ENCODE measurements at regions of chr14 and their contacts with region 1.

Region 1: GRCh38 chr14:49767562-49768300 is at the start of gene KLHDC2:
- DNase-seq: peak; percentile 84 to 94 (median 89)
- ATAC-seq: peak; percentile 88
- H3K4me3 ChIP-seq: peak within 1 kb of the TSS; percentile 62
- H3K4me3 Mint-ChIP-seq: peak within 1 kb of the TSS; percentile 95 to 99 (median 98)
- H3K27ac ChIP-seq: peak within 1 kb of the TSS; percentile 96
- H3K27ac Mint-ChIP-seq: peak within 1 kb of the TSS; percentile 98 to 100 (median 99)
- H3K4me1 ChIP-seq: peaks cover 26 to 27% of the 10 kb centered on the region in 2 donors
- H3K4me1 Mint-ChIP-seq: peaks cover 20 to 46% (median 40%) of the 10 kb centered on the region in 7 donors
- H3K27me3 ChIP-seq: no peaks in the 10 kb centered on the region
- H3K27me3 Mint-ChIP-seq: peaks cover 0 to 2% (median 0%) of the 10 kb centered on the region in 5 donors
- total RNA-seq, gene KLHDC2: 33.2 to 105 (median 84.7) TPM

Region 2: DNA sequence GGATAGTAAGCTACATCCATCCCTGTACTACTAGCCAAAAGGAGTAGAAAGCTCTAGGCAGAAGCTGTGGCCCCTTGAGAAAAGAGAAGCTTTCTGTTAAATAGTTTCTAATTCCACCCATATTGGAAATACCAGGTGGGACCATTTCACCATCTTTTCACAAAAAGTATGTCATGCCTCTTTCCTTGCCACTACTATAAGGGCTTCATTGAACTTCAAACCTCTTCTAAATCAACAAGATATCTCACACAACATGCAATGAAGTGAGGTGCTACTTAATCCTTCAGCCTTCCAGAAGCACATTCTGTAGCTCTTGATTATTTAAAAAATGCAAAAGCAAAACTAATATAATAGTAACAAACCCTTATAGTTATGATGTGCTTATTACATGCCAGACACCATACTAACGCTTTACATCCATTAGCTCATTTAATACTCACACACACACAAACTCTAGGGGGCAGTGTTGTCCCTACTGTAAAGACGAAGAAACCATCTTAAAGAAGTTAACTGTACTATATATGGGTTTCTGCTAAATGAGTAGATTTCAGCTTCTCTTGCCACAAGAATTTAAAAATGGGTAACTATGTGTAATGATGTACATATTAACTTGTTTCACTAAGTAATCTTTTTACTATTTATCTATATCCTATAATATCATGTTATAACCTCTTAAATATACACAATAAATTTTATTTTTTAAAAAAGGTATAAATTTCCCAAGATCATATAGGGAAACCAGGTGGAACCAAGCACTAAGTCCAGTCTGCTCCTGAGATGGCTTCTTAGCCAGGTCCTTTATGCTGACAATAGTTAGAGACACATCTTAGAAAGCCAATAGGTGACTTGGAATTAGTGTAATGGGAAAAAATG is 306.0 kb before region 1 on chr14:
- CTCF ChIA-PET with region 1: no interaction called
- POLR2A ChIA-PET with region 1: no interaction called
- intact Hi-C with region 1: loop called in 1 of 2 experiments (anchors 10 kb)
- DNase-seq: peak in 7 of 9 donors; percentile 43 to 74 (median 67)
- ATAC-seq: peak; percentile 95
- H3K4me3 ChIP-seq: no peak overlapping the region
- H3K4me3 Mint-ChIP-seq: no peak overlapping the region
- H3K27ac ChIP-seq: no peak overlapping the region
- H3K27ac Mint-ChIP-seq: no peak overlapping the region
- H3K4me1 ChIP-seq: no peaks in the 10 kb centered on the region
- H3K4me1 Mint-ChIP-seq: no peaks in the 10 kb centered on the region
- H3K27me3 ChIP-seq: no peaks in the 10 kb centered on the region
- H3K27me3 Mint-ChIP-seq: peaks cover 0 to 31% (median 6%) of the 10 kb centered on the region in 5 donors

Region 3: GRCh38 chr14:49598485-49599300 is 169.0 kb before region 1 on chr14 and contains the start of gene LRR1:
- CTCF ChIA-PET with region 1: no interaction called
- POLR2A ChIA-PET with region 1: interaction called, 6 read pairs
- intact Hi-C with region 1: loop called in 1 of 2 experiments (anchors 1 kb)
- DNase-seq: peak; percentile 74 to 91 (median 84)
- ATAC-seq: peak; percentile 93
- H3K4me3 ChIP-seq: peak within 1 kb of the TSS; percentile 94
- H3K4me3 Mint-ChIP-seq: peak within 1 kb of the TSS; percentile 91 to 100 (median 98)
- H3K27ac ChIP-seq: peak within 1 kb of the TSS; percentile 92
- H3K27ac Mint-ChIP-seq: peak within 1 kb of the TSS; percentile 95 to 99 (median 98)
- H3K4me1 ChIP-seq: peaks cover 0 to 5% of the 10 kb centered on the region in 2 donors
- H3K4me1 Mint-ChIP-seq: peaks cover 5 to 46% (median 37%) of the 10 kb centered on the region in 7 donors
- H3K27me3 ChIP-seq: no peaks in the 10 kb centered on the region
- H3K27me3 Mint-ChIP-seq: no peaks in the 10 kb centered on the region
- total RNA-seq, gene LRR1: 7.5 to 39.7 (median 13.3) TPM

Region 4: GRCh38 chr14:49620182-49621113 is 147.3 kb before region 1 on chr14 and contains the starts of genes MGAT2 and RPL36AL:
- CTCF ChIA-PET with region 1: interaction called, 6 read pairs
- POLR2A ChIA-PET with region 1: interaction called, 79 read pairs
- intact Hi-C with region 1: loop called (anchors 1 kb)
- DNase-seq: peak; percentile 89 to 95 (median 94)
- ATAC-seq: peak; percentile 92
- H3K4me3 ChIP-seq: peak within 1 kb of the TSS; percentile 98
- H3K4me3 Mint-ChIP-seq: peak within 1 kb of the TSS; percentile 94 to 99 (median 98)
- H3K27ac ChIP-seq: peak within 1 kb of the TSS; percentile 97
- H3K27ac Mint-ChIP-seq: peak within 1 kb of the TSS; percentile 95 to 100 (median 99)
- H3K4me1 ChIP-seq: peaks cover 40 to 42% of the 10 kb centered on the region in 2 donors
- H3K4me1 Mint-ChIP-seq: peaks cover 36 to 75% (median 56%) of the 10 kb centered on the region in 7 donors
- H3K27me3 ChIP-seq: no peaks in the 10 kb centered on the region
- H3K27me3 Mint-ChIP-seq: no peaks in the 10 kb centered on the region
- total RNA-seq, gene MGAT2: 16.8 to 69.3 (median 35.1) TPM
- total RNA-seq, gene RPL36AL: 177 to 429 (median 281) TPM

Region 5: GRCh38 chr14:49692811-49693734 is 74.7 kb before region 1 on chr14 and contains the start of gene KLHDC1:
- CTCF ChIA-PET with region 1: interaction called, 3 read pairs
- POLR2A ChIA-PET with region 1: interaction called, 64 read pairs
- intact Hi-C with region 1: loop called (anchors 1 kb)
- DNase-seq: peak; percentile 70 to 84 (median 80)
- ATAC-seq: peak; percentile 89
- H3K4me3 ChIP-seq: peak within 1 kb of the TSS; percentile 67
- H3K4me3 Mint-ChIP-seq: peak within 1 kb of the TSS; percentile 81 to 100 (median 89)
- H3K27ac ChIP-seq: peak within 1 kb of the TSS; percentile 80
- H3K27ac Mint-ChIP-seq: peak within 1 kb of the TSS; percentile 79 to 99 (median 94)
- H3K4me1 ChIP-seq: peaks cover 8 to 19% of the 10 kb centered on the region in 2 donors
- H3K4me1 Mint-ChIP-seq: peaks cover 20 to 52% (median 43%) of the 10 kb centered on the region in 7 donors
- H3K27me3 ChIP-seq: no peaks in the 10 kb centered on the region
- H3K27me3 Mint-ChIP-seq: no peaks in the 10 kb centered on the region
- total RNA-seq, gene KLHDC1: 2.6 to 18.0 (median 12.2) TPM

Region 6: GRCh38 chr14:49754570-49755097 is 13.1 kb before region 1 on chr14:
- CTCF ChIA-PET with region 1: no interaction called
- POLR2A ChIA-PET with region 1: no interaction called
- intact Hi-C with region 1: no loop called
- DNase-seq: no peak
- ATAC-seq: no peak
- H3K4me3 ChIP-seq: no peak overlapping the region
- H3K4me3 Mint-ChIP-seq: no peak overlapping the region
- H3K27ac ChIP-seq: no peak overlapping the region
- H3K27ac Mint-ChIP-seq: peak overlapping the region in 1 of 9 donors; percentile 41
- H3K4me1 ChIP-seq: no peaks in the 10 kb centered on the region
- H3K4me1 Mint-ChIP-seq: peaks cover 0 to 2% (median 0%) of the 10 kb centered on the region in 7 donors
- H3K27me3 ChIP-seq: no peaks in the 10 kb centered on the region
- H3K27me3 Mint-ChIP-seq: peaks cover 0 to 18% (median 0%) of the 10 kb centered on the region in 5 donors

Region 7: GRCh38 chr14:49786315-49787110 is 18.8 kb after region 1 on chr14:
- CTCF ChIA-PET with region 1: interaction called, 5 read pairs
- POLR2A ChIA-PET with region 1: interaction called, 58 read pairs
- intact Hi-C with region 1: no loop called
- DNase-seq: no peak
- ATAC-seq: no peak
- H3K4me3 ChIP-seq: no peak overlapping the region
- H3K4me3 Mint-ChIP-seq: no peak overlapping the region
- H3K27ac ChIP-seq: no peak overlapping the region
- H3K27ac Mint-ChIP-seq: peak overlapping the region in 6 of 9 donors; percentile 2 to 62 (median 27)
- H3K4me1 ChIP-seq: no peaks in the 10 kb centered on the region
- H3K4me1 Mint-ChIP-seq: peaks cover 0 to 9% (median 0%) of the 10 kb centered on the region in 7 donors
- H3K27me3 ChIP-seq: no peaks in the 10 kb centered on the region
- H3K27me3 Mint-ChIP-seq: no peaks in the 10 kb centered on the region

Region 8: DNA sequence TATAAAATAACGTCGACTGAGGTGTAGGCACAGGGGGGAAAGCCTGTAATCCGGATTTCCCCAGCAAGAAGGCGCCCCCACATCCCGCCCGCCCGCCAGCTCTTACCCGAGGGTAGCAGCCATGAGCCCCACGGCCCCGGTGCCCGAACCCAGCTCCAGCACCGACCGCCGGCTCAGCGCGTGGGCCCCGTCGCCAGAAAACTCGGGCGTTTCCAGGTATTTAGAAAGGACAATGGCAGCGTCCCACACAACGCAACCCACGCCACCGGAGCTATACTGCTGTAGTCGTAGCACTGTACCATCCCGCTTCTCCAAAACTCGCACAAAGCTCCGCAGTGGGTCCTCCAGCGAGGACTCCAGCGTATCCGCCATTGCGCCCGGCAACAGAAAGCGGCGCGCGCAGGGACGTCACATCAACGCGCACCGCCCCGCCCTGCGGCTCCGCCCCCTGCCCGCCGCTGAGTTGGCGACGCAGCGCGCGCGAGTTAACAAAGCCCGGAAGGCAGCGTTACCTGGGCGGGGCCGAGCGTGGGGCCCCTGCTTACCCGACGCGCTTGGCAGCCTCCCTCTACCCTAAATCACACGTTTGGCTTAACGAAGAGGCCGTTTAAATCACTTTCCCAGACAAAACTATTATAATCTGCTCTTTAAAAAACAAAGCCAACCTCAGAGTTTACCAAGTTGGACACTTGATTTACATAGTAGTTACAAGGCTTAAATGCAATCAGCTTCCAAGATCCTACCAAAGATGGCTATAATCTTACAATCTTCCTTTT is 348.6 kb after region 1 on chr14 and contains the start of gene VCPKMT:
- CTCF ChIA-PET with region 1: no interaction called
- POLR2A ChIA-PET with region 1: interaction called, 11 read pairs
- intact Hi-C with region 1: loop called (anchors 1 to 2 kb)
- DNase-seq: peak; percentile 93 to 97 (median 97)
- ATAC-seq: peak; percentile 99
- H3K4me3 ChIP-seq: peak within 1 kb of the TSS; percentile 74
- H3K4me3 Mint-ChIP-seq: peak within 1 kb of the TSS; percentile 92 to 98 (median 96)
- H3K27ac ChIP-seq: peak within 1 kb of the TSS; percentile 94
- H3K27ac Mint-ChIP-seq: peak within 1 kb of the TSS; percentile 97 to 99 (median 98)
- H3K4me1 ChIP-seq: peaks cover 18 to 20% of the 10 kb centered on the region in 2 donors
- H3K4me1 Mint-ChIP-seq: peaks cover 11 to 37% (median 23%) of the 10 kb centered on the region in 7 donors
- H3K27me3 ChIP-seq: no peaks in the 10 kb centered on the region
- H3K27me3 Mint-ChIP-seq: no peaks in the 10 kb centered on the region
- total RNA-seq, gene VCPKMT: 10.3 to 25.9 (median 17.4) TPM